ENCODE measurements at regions of chr12 and their contacts with region 1.

Region 1: DNA sequence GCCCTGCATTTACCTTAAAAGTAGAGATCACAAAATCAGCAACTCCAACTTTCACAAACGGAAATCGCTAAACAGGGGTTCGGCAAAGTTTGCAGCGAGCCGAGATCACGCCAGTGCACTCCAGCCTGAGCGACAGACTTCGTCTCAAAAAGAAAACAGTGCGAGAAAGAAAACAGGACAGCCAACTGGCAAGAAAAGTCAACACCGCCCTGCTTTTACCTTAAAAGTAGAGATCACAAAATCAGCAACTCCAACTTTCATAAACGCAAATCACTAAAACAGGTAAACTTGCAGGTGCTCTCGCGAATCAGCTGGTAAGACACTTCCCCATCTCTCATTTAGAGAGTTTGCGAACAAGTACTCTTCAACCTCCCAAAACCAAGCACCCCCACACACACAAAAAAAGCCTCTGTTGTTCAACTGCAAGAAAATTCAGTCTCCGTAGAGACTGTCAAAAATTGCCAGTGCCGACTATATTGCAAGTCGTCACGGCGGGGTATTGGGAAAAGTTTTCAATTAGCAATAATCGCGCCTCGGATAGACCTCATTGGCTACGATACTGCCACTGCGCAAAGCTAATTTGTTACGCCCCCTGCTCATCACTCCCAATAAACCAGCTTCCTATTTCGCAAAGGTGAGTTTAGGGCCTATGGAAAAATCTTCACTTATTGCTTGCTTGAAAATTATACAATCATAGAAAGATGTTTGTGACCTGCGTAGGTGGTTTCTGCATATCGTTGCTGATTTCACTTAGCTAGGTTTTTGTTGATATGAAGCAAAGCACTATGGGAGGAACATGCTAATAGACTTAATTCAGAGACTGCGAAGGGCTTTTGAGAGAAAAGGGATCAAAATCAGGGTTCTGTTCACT is at the start of gene RNU4-1:
- DNase-seq: peak; percentile 45 to 98 (median 81)
- ATAC-seq: peak; percentile 42 to 47
- H3K4me3 Mint-ChIP-seq: no peak within 1 kb of the TSS
- H3K27ac Mint-ChIP-seq: peak within 1 kb of the TSS in 2 of 10 donors; percentile 8 to 21
- H3K4me1 Mint-ChIP-seq: peaks cover 5 to 13% (median 6%) of the 10 kb centered on the region in 4 donors
- H3K27me3 Mint-ChIP-seq: no peaks in the 10 kb centered on the region
- polyA plus RNA-seq, gene RNU4-1: not detected

Region 2: DNA sequence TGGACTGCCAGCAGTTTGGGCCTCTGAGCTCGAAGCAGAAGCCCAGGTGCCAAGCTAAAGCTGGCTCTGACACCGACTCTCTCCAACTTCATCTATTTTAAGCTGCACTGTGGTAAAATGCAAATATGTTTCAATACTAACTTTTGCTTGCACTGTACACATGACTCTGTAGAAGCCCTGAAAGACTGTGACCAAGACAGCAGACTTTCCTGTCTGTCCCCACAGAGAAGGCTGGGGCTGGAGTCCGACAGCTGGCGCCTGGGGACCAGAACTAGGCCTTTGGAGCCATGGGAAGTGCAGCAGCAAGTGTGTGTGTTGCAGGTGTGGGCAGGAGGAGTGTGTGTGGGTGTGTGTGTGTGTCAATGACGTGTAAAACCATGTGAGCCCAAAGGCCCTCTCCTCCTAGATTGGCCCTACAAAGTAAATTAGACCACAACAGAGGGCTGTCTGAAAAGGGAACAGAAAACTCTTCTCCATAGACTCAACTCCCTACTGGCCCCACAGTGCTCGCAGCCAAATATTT is 160.0 kb before region 1 on chr12:
- POLR2A ChIA-PET with region 1: no interaction called
- DNase-seq: no peak
- ATAC-seq: no peak
- H3K4me3 Mint-ChIP-seq: no peak overlapping the region
- H3K27ac Mint-ChIP-seq: peak overlapping the region in 1 of 10 donors; percentile 68
- H3K4me1 Mint-ChIP-seq: peaks cover 0 to 8% (median under 1%) of the 10 kb centered on the region in 4 donors
- H3K27me3 Mint-ChIP-seq: no peaks in the 10 kb centered on the region

Region 3: DNA sequence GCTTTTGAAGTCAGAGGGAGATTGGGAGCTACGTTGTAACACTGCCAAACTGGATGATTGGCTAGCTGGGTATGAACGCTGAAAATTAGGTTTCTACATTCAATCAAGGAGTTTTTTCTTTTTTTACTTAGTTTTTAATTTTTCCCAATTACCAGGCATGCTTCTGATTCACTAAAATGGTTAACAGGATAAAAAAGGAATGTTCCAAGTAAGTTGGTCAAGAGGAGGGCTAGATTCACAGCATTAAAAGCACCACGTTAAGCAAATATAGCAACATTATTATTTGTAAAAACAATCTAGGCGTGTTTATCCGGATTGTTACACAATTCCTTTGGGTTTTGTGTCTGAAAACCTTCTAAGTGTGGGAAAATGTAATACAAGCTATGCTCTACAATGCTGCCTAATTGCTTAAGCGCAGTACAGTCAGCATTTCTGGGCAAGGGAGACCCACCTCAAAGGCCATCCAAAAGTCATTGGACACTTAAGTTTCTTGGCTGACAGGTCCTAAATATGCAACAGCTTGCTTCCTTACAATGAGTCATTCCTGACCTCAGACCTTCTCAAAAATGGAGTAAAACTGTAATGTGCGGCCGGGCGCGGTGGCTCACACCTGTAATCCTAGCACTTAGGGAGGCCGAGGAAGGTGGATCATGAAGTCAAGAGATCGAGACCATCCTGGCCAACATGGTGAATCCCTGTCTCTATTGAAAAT is 93.1 kb before region 1 on chr12:
- POLR2A ChIA-PET with region 1: interaction called, 134 read pairs
- DNase-seq: no peak
- ATAC-seq: no peak
- H3K4me3 Mint-ChIP-seq: peak overlapping the region; percentile 92 to 99 (median 98)
- H3K27ac Mint-ChIP-seq: peak overlapping the region; percentile 92 to 99 (median 98)
- H3K4me1 Mint-ChIP-seq: peaks cover 12 to 51% (median 35%) of the 10 kb centered on the region in 4 donors
- H3K27me3 Mint-ChIP-seq: peaks cover 0 to 2% (median 0%) of the 10 kb centered on the region in 5 donors

Region 4: DNA sequence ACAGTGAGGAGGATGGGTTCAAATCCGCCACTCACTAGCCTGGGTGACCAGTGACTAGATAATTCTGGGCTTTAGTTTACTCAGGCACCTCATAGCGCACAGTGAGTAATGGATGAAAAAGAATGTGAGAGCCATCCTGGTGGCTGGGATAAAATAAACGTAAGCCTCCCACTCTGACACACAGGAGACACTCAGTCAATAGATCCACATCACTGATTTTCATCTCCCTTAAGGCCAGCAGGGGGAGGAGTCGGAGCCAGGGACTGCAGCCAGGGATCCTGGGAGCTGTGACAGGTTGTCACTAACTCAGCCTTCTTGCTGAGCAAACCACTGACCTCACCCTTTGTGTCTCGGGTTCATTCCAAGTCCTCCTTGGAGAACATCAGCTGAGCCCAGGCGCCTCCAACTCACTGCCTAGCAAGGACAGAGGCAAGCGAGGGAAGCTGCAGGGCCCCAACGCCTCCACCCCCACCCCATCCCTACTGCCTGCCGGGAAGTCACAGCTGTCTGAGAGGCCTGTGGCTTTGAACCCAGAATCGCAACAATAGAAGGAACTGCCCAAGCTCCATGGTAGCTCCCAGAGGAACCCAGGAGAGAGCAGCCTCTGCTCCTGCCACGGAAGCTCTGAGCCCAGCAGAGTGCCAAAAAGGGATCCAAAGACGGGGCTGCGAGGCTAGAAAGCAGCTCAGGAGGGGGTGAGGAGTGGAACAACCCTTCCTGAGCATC is 58.1 kb before region 1 on chr12:
- POLR2A ChIA-PET with region 1: interaction called, 92 read pairs
- DNase-seq: no peak
- ATAC-seq: no peak
- H3K4me3 Mint-ChIP-seq: peak overlapping the region in 2 of 10 donors; percentile 18 to 20
- H3K27ac Mint-ChIP-seq: peak overlapping the region; percentile 50 to 95 (median 78)
- H3K4me1 Mint-ChIP-seq: peaks cover 42 to 96% (median 88%) of the 10 kb centered on the region in 4 donors
- H3K27me3 Mint-ChIP-seq: no peaks in the 10 kb centered on the region

Region 5: DNA sequence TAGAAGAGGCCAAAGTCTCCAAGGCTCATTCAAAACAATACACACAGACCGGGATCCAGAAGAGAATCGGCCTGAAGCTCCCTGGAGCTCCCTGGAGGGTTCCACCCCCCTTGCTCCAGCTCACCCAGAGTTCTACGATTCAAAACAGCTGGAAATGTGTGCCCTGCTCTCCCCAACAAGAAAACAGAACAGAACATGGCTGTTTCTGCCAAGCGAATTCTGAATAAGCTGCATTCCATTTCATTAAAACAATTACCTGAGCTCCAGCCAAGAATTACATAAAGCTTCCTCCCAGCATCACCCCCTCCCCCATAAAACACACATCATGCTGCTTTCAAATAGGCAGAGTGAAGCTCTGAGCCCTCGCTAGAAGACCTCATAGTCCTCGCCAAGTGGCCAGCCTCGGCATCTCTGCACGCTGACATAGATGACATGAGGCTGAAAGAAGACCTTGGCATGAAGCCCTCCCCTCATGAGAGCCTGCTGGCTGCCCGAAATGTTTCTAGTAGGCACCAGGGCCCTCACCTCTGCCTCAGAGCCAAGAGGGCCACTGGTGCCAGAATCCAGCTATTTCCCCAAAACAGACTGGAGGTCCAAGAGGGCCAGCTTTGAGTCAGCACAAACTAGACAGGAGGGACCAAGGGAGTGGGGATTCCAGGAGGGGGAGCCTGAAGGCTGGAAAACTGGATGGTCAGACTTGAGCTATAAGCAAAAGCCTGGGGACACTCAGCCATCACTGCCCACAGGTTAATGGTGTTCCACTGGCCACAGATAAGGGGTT is 35.7 kb before region 1 on chr12:
- POLR2A ChIA-PET with region 1: interaction called, 105 read pairs
- DNase-seq: no peak
- ATAC-seq: no peak
- H3K4me3 Mint-ChIP-seq: peak overlapping the region in 8 of 10 donors; percentile 5 to 68 (median 43)
- H3K27ac Mint-ChIP-seq: peak overlapping the region; percentile 82 to 94 (median 90)
- H3K4me1 Mint-ChIP-seq: peaks cover 40 to 92% (median 89%) of the 10 kb centered on the region in 4 donors
- H3K27me3 Mint-ChIP-seq: no peaks in the 10 kb centered on the region

Region 6: GRCh38 chr12:120317224-120318105 is 24.6 kb after region 1 on chr12:
- POLR2A ChIA-PET with region 1: interaction called, 46 read pairs
- DNase-seq: peak; percentile 99 to 100 (median 100)
- ATAC-seq: peak; percentile 99
- H3K4me3 Mint-ChIP-seq: peak overlapping the region; percentile 86 to 95 (median 92)
- H3K27ac Mint-ChIP-seq: peak overlapping the region; percentile 90 to 98 (median 97)
- H3K4me1 Mint-ChIP-seq: peaks cover 5 to 15% (median 13%) of the 10 kb centered on the region in 4 donors
- H3K27me3 Mint-ChIP-seq: no peaks in the 10 kb centered on the region

Region 7: DNA sequence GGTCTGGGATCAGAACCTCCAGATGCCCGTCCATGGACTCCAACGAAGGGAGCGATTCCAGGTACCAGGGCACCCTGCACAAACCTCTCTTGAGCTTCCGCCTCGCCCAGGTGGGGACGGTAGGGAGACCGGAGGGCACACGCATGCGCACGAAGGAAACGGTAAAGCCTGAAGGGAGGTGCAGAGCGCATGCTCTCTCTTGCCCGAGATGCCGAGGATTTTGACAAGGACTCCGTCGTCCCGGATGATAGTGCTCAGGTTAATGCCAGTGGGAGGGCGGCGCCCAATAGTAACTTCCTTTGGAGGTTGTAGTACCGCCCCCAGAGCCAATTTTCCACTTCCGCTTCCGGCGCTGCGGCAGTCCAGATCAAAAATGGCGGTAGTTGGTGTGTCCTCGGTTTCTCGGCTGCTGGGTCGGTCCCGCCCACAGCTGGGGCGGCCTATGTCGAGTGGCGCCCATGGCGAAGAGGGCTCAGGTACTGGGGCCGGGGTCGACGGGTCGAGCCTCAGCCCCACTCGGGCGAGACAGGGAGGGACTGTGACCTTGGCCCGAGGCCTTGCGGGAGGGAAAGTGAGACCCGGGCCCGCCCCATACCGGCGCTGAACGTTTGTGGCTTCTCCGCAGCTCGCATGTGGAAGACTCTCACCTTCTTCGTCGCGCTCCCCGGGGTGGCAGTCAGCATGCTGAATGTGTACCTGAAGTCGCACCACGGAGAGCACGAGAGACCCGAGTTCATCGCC is 145.0 kb after region 1 on chr12 and contains the start of gene COX6A1:
- POLR2A ChIA-PET with region 1: interaction called, 13 read pairs
- DNase-seq: peak; percentile 86 to 99 (median 97)
- ATAC-seq: peak; percentile 94 to 96
- H3K4me3 Mint-ChIP-seq: peak within 1 kb of the TSS; percentile 83 to 98 (median 96)
- H3K27ac Mint-ChIP-seq: peak within 1 kb of the TSS; percentile 47 to 97 (median 95)
- H3K4me1 Mint-ChIP-seq: peaks cover 5 to 33% (median 30%) of the 10 kb centered on the region in 4 donors
- H3K27me3 Mint-ChIP-seq: peaks cover 0 to 2% (median 0%) of the 10 kb centered on the region in 5 donors
- polyA plus RNA-seq, gene COX6A1: 683 to 799 (median 722) TPM

Measured in naive thymus-derived CD8-positive, alpha-beta T cell (primary cell).